Gastrocnemius medialis (tissue), 4 donors: ENCODE measurements at regions of chr17 and their contacts with region 1.

Region 1: DNA sequence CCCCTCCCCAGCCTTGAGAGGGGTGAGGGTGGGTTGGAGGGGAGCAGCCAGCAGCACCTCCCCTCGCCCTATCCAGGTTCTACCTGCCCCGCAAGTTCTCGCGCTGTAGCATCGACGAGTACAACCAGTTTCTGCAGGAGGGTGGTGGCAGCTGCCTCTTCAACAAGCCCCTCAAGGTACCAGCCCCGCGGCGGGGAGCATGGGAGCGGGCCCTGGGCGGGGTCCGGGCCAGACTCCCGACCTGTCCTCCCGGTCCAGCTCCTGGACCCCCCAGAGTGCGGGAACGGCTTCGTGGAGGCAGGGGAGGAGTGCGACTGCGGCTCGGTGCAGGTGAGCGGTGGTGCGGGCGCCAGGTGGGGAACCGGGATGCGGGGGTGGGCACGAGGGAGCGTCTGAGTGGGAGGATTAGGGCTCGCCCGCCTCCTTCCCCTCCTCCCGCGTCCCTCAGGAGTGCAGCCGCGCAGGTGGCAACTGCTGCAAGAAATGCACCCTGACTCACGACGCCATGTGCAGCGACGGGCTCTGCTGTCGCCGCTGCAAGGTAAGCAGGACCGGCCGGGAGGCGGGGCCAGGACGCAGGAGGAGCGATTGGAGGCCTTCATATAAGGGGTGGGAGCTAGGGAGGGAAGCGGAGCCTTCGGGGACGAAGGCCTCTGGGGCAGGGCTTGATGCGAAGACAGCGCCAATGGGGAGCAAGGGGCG is 16.5 kb downstream of the ADAM11 start:
- DNase-seq: peak; percentile 87 to 90
- ATAC-seq: peak; percentile 91 to 94
- H3K4me3 ChIP-seq: peak overlapping the region; percentile 56 to 88 (median 64)
- H3K27ac ChIP-seq: peak overlapping the region in 1 of 4 donors; percentile 20
- H3K4me1 ChIP-seq: peaks cover 6 to 14% of the 10 kb centered on the region in 2 donors
- H3K27me3 ChIP-seq: peaks cover 0 to 15% (median 8%) of the 10 kb centered on the region in 3 donors
- CTCF ChIP-seq: peak in 1 of 5 experiments; percentile 0
- POLR2A ChIP-seq: no peak

Region 2: DNA sequence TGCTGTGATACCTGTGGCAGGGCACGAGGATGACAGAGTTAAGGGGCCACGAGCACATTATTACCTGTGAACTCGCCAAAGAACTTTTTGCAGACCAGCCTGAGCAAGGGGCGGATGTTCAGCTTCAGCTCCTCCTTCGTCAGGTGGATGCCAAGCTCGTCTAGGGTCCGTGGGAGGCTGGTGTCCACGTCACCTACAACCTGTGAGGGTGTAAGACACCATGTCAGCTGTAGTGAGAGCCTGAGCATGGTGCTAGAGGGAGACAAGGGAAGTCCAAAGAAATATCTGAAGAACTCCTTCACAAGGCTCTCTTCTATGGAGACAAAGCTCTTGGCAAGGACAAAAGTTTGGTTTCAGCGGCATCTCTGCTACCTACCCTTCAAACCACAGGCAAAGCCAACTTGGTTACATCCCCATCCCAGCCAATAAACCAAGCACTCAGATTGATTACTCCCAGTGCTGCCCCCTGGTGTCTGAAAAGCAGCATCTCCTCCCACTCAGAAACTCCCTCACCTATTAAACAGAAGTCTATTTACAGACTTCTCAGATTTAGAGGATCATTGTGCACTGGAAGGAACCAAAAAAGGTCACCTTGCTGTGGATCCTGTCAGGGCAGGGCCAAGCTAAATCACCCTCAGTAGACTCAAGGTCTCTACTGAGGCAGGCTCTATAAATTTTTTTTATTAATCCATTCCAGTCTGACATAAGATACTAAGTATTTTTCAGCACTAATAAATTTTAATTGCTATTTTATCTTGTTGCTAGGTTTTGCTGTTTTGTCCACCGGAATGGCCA is 89.8 kb after region 1 on chr17:
- in situ Hi-C with region 1: loop called (anchors 5 to 10 kb)
- intact Hi-C with region 1: loop called (anchors 1 kb)
- DNase-seq: peak; percentile 20 to 31
- ATAC-seq: peak; percentile 42 to 49
- H3K4me3 ChIP-seq: no peak overlapping the region
- H3K27ac ChIP-seq: no peak overlapping the region
- H3K4me1 ChIP-seq: no peaks in the 10 kb centered on the region
- H3K27me3 ChIP-seq: no peaks in the 10 kb centered on the region
- CTCF ChIP-seq: peak; percentile 70 to 88 (median 78)
- POLR2A ChIP-seq: no peak

Region 3: DNA sequence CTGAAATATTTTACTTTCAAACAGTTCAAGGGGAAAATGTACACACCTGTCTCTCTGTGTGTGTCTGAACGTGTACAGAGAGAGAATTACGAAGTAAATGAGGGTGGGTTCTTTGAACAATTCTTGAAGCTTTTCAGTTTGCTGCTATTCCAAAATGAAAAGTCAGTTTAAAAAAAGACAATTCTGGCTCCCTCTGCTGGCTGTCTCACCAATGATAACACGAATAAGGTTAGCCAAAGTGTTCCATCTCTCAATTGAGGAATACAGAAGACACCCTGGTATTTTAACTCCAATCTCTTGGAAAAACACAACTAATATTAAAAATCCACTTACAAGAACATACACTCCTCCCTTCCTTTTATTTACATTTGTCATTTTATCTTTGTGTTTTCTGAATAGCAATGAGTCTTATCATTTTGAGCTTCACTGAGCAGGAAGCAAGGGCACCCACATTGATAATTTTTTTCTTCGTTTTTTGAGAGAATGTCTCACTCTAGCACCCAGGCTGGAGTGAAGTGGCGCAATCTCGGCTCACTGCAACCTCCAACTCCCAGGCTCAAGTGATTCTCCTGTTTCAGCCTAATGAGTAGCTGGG is 103.4 kb after region 1 on chr17:
- in situ Hi-C with region 1: no loop called
- intact Hi-C with region 1: loop called (anchors 1 kb)
- DNase-seq: no peak
- ATAC-seq: no peak
- H3K4me3 ChIP-seq: no peak overlapping the region
- H3K27ac ChIP-seq: no peak overlapping the region
- H3K4me1 ChIP-seq: no peaks in the 10 kb centered on the region
- H3K27me3 ChIP-seq: no peaks in the 10 kb centered on the region
- CTCF ChIP-seq: peak in 4 of 5 experiments; percentile 8 to 40 (median 28)
- POLR2A ChIP-seq: no peak

Region 4: GRCh38 chr17:45021607-45022287 is 246.5 kb after region 1 on chr17:
- in situ Hi-C with region 1: loop called (anchors 10 to 25 kb)
- intact Hi-C with region 1: loop called (anchors 2 kb)
- DNase-seq: peak; percentile 23 to 47
- ATAC-seq: peak; percentile 70 to 81
- H3K4me3 ChIP-seq: peak overlapping the region; percentile 50 to 83 (median 54)
- H3K27ac ChIP-seq: peak overlapping the region; percentile 32 to 66 (median 64)
- H3K4me1 ChIP-seq: peaks cover 16 to 17% of the 10 kb centered on the region in 2 donors
- H3K27me3 ChIP-seq: no peaks in the 10 kb centered on the region
- CTCF ChIP-seq: peak; percentile 71 to 97 (median 96)
- POLR2A ChIP-seq: no peak

Region 5: GRCh38 chr17:45051060-45051719 is 275.9 kb after region 1 on chr17 and contains the start of gene DCAKD:
- in situ Hi-C with region 1: loop called in 1 of 4 experiments (anchors 25 kb)
- intact Hi-C with region 1: no loop called
- DNase-seq: peak; percentile 91 to 94
- ATAC-seq: peak; percentile 90 to 93
- H3K4me3 ChIP-seq: peak within 1 kb of the TSS; percentile 76 to 82 (median 78)
- H3K27ac ChIP-seq: peak within 1 kb of the TSS; percentile 94 to 97 (median 94)
- H3K4me1 ChIP-seq: peaks cover 17 to 20% of the 10 kb centered on the region in 2 donors
- H3K27me3 ChIP-seq: no peaks in the 10 kb centered on the region
- CTCF ChIP-seq: peak in 2 of 5 experiments; percentile 27 to 31
- POLR2A ChIP-seq: peak; percentile 84 to 85
- total RNA-seq, gene DCAKD: 9.8 to 14.4 (median 12.3) TPM